Naive thymus-derived CD4-positive, alpha-beta T cell (primary cell): ENCODE measurements at regions of chrX and their contacts with region 1.

Region 1: DNA sequence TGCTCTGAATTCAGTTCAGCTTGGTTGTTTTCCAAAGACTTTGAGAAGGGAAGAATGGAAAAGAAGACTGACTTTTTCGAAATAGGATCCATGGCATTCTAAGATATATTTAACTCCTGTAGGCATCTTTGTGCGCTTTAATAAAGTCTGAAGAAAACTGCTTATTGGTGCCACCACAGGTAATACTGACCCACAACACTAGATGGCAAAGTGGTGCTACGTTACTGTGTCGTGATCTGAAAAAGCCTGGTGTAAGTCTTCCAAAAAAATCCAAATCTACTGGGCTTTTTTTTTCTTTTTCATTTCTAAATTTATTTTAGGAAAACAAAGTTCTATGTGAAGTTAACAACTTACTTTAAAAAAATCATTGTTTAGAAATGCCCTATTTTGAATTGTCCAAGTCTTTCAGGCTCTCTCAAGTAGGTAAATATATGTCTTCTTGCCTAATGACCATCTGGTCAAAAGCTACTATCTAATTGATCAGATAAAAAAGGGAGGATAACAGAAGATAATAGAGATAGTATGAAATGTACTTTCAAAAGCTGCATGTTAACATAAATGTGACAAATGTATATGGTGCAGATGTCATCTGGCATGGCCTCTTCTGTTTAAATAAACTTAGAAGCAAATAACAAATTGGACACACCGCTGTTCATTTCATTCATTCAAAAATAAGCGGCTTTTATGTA is 47.0 kb upstream of the MID1IP1 start:
- DNase-seq: peak in 6 of 9 donors; percentile 1 to 40 (median 32)
- ATAC-seq: peak; percentile 65
- H3K4me3 ChIP-seq: no peak overlapping the region
- H3K4me3 Mint-ChIP-seq: no peak overlapping the region
- H3K27ac ChIP-seq: no peak overlapping the region
- H3K27ac Mint-ChIP-seq: no peak overlapping the region
- H3K4me1 ChIP-seq: no peaks in the 10 kb centered on the region
- H3K4me1 Mint-ChIP-seq: no peaks in the 10 kb centered on the region
- H3K27me3 ChIP-seq: no peaks in the 10 kb centered on the region
- H3K27me3 Mint-ChIP-seq: no peaks in the 10 kb centered on the region

Region 2: DNA sequence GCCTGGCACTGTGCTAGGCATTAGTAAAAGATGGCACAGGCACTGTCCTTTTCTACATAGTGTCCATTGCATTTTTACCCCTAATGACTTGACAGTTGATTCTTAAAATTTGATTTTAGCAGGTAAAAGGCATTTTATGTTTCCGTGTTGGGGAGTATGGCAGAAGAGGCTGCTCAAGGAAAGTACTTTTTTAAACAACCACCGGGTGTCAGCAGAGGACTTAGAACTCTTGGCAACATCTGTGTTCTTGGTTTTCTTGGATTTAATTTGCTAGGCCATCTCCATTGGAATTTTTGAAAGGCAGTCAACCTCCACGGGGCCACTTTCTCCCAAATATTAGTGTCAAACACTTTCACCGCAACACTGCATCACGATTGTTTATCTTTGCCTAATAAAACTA is 90.0 kb before region 1 on chrX:
- CTCF ChIA-PET with region 1: no interaction called
- POLR2A ChIA-PET with region 1: no interaction called
- intact Hi-C with region 1: loop called in 1 of 2 experiments (anchors 10 kb)
- DNase-seq: peak in 1 of 9 donors; percentile 1
- ATAC-seq: no peak
- H3K4me3 ChIP-seq: no peak overlapping the region
- H3K4me3 Mint-ChIP-seq: no peak overlapping the region
- H3K27ac ChIP-seq: no peak overlapping the region
- H3K27ac Mint-ChIP-seq: no peak overlapping the region
- H3K4me1 ChIP-seq: no peaks in the 10 kb centered on the region
- H3K4me1 Mint-ChIP-seq: peaks cover 0 to under 1% (median under 1%) of the 10 kb centered on the region in 7 donors
- H3K27me3 ChIP-seq: no peaks in the 10 kb centered on the region
- H3K27me3 Mint-ChIP-seq: no peaks in the 10 kb centered on the region